Natural killer cell (primary cell): ENCODE measurements at regions of chr6 and their contacts with region 1.

Region 1: GRCh38 chr6:129251669-129252376 is 368.9 kb downstream of the LAMA2 start:
- DNase-seq: peak in 1 of 2 donors; percentile 72
- ATAC-seq: peak; percentile 69 to 85 (median 79)
- H3K4me3 ChIP-seq: no peak overlapping the region
- H3K4me3 Mint-ChIP-seq: no peak overlapping the region
- H3K27ac ChIP-seq: no peak overlapping the region
- H3K27ac Mint-ChIP-seq: no peak overlapping the region
- H3K4me1 ChIP-seq: peaks cover 5% of the 10 kb centered on the region
- H3K4me1 Mint-ChIP-seq: peaks cover 5 to 6% of the 10 kb centered on the region in 2 donors
- H3K27me3 ChIP-seq: peaks cover 12% of the 10 kb centered on the region
- H3K27me3 Mint-ChIP-seq: peaks cover 18 to 26% of the 10 kb centered on the region in 2 donors
- CTCF ChIP-seq: peak; percentile 70

Region 2: GRCh38 chr6:127737009-127737486 is 1514.8 kb before region 1 on chr6:
- intact Hi-C with region 1: loop called (anchors 5 kb)
- DNase-seq: peak in 1 of 2 donors; percentile 85
- ATAC-seq: peak; percentile 69 to 79 (median 77)
- H3K4me3 ChIP-seq: no peak overlapping the region
- H3K4me3 Mint-ChIP-seq: no peak overlapping the region
- H3K27ac ChIP-seq: no peak overlapping the region
- H3K27ac Mint-ChIP-seq: no peak overlapping the region
- H3K4me1 ChIP-seq: no peaks in the 10 kb centered on the region
- H3K4me1 Mint-ChIP-seq: no peaks in the 10 kb centered on the region
- H3K27me3 ChIP-seq: no peaks in the 10 kb centered on the region
- H3K27me3 Mint-ChIP-seq: peaks cover 0 to 7% of the 10 kb centered on the region in 2 donors
- CTCF ChIP-seq: peak; percentile 57

Region 3: DNA sequence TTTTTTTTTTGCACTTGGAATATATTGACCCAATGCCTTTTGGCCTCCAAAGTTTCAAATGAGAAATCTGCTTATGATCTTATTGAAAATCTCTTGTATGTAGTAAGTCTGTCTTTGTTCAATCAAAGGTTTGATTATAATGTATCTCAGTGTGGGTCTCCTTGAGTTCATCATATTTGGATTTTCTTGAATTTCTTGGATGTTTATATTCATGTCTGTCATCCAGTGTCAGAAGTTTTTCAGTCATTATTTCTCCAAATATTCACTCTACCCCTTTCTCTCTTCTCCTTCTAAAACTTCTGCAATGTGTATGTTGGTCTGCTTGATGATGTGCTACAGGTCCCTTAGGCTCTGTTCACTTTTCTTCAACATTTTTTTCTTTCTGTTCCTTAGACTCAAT is 635.5 kb before region 1 on chr6:
- intact Hi-C with region 1: no loop called
- DNase-seq: no peak
- ATAC-seq: no peak
- H3K4me3 ChIP-seq: no peak overlapping the region
- H3K4me3 Mint-ChIP-seq: no peak overlapping the region
- H3K27ac ChIP-seq: no peak overlapping the region
- H3K27ac Mint-ChIP-seq: no peak overlapping the region
- H3K4me1 ChIP-seq: no peaks in the 10 kb centered on the region
- H3K4me1 Mint-ChIP-seq: no peaks in the 10 kb centered on the region
- H3K27me3 ChIP-seq: no peaks in the 10 kb centered on the region
- H3K27me3 Mint-ChIP-seq: no peaks in the 10 kb centered on the region
- CTCF ChIP-seq: no peak

Region 4: GRCh38 chr6:128725271-128726233 is 526.3 kb before region 1 on chr6:
- intact Hi-C with region 1: loop called (anchors 2 kb)
- DNase-seq: peak in 1 of 2 donors; percentile 45
- ATAC-seq: no peak
- H3K4me3 ChIP-seq: no peak overlapping the region
- H3K4me3 Mint-ChIP-seq: no peak overlapping the region
- H3K27ac ChIP-seq: no peak overlapping the region
- H3K27ac Mint-ChIP-seq: no peak overlapping the region
- H3K4me1 ChIP-seq: no peaks in the 10 kb centered on the region
- H3K4me1 Mint-ChIP-seq: no peaks in the 10 kb centered on the region
- H3K27me3 ChIP-seq: no peaks in the 10 kb centered on the region
- H3K27me3 Mint-ChIP-seq: peaks cover 4 to 33% of the 10 kb centered on the region in 2 donors
- CTCF ChIP-seq: peak; percentile 73

Region 5: DNA sequence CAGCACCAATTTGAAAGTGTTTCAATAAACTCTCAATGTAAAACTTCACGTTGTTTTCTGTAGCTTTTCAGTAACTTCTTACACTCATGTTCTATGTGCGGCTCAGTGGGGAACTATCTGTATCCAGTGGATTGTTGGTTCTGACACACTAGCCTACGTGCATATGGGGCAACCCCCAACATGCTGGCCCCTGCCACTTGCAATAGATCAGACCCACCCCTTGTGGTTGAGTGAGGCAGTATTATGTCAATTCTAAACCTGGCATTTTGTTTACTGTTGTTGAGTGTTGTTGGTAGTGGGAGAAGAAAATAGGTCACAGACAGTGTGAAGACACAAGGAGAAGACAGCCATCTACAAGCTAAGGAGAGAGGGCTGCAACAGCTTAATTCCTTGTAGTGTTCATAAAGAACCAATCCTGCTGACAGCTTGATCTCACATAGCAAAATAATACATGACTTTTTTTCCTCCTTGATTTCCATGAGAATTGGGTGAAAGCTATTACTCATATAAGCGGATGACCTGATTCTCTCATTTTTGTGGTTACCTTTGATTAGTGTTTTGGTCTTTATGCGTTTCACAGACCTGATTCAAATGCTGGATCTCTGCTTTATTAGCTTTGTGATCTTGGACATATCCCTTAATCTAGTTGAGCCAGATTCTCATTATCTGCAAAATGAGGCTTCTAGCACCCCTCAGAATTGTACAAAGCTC is 48.5 kb before region 1 on chr6:
- intact Hi-C with region 1: no loop called
- DNase-seq: no peak
- ATAC-seq: no peak
- H3K4me3 ChIP-seq: no peak overlapping the region
- H3K4me3 Mint-ChIP-seq: no peak overlapping the region
- H3K27ac ChIP-seq: no peak overlapping the region
- H3K27ac Mint-ChIP-seq: no peak overlapping the region
- H3K4me1 ChIP-seq: no peaks in the 10 kb centered on the region
- H3K4me1 Mint-ChIP-seq: no peaks in the 10 kb centered on the region
- H3K27me3 ChIP-seq: peaks cover 2% of the 10 kb centered on the region
- H3K27me3 Mint-ChIP-seq: peaks cover 6 to 16% of the 10 kb centered on the region in 2 donors
- CTCF ChIP-seq: no peak